AG04449 (cell line): ENCODE measurements at regions of chr11 and their contacts with region 1.

Region 1: DNA sequence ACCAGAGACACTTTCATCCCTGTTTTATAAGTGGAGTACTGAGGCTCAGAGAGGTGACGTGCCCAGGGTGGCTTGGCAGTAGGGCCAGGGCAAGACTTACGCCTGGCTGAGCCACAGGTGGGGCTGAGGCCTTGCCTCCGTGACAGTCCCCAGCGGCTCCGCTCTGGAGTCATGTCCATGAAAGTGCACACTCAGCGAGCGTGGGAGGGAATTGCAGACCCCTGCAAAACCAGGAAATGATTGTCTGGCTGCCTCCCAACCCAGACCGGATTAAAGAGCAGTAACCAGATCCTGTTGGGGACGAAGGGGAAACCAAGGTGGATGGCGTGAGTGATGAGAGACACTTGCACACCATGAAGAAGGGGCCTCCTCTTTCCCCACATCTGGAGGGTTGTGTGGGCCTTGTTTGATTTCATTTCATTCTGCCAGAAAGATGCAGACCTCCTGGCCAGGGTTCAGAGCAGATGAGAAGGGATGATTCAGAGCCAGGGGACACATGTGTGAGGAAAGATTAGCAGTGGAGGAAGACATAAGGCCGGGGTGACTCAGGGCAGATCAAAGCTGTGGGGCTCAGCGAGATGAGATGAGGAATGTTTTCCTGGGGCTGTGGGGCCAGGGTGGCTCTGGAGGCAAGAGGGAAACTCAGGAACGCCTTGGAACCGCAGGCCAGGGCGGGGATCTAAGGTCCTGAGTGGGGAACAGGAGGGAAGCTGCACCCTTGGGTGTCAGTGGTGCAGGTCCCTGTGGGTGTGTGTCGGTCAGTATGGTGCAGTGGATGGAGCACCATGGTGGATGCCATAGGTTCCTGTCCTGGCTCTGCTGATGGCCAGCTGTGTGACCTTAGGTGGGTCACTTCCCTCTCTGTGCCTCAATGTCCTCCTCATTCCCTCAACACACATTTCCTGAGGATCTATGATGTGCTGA is 29.9 kb upstream of the LRRC32 start:
- DNase-seq: peak; percentile 69
- H3K4me3 ChIP-seq: peak overlapping the region; percentile 15; the same call in 1 of the 2 replicates
- CTCF ChIP-seq: no peak

Region 2: DNA sequence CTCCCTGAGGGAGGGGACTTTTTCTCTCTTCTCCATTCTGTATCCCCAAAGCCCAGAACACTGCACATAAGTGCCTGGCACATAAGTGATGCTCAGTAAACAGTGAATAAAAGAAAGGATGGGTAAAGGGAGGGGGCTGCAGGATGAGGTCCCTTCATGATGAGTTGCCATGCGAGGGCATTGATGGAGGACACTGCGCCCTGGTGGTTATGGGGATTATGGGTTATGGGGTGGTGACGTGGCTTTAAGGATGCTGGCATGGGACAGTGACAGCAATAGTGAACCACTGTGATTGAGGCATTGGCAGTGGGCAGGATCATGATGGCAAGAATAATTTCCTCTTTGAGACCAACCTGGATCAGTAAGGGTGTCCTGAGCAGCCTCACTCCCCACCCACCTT is 14.1 kb after region 1 on chr11:
- CTCF ChIA-PET with region 1: interaction called, 44 read pairs
- POLR2A ChIA-PET with region 1: no interaction called
- DNase-seq: no peak
- H3K4me3 ChIP-seq: no peak overlapping the region
- CTCF ChIP-seq: no peak

Region 3: GRCh38 chr11:77187776-77188632 is 487.6 kb after region 1 on chr11:
- CTCF ChIA-PET with region 1: no interaction called
- POLR2A ChIA-PET with region 1: no interaction called
- DNase-seq: peak; percentile 21
- H3K4me3 ChIP-seq: no peak overlapping the region
- CTCF ChIP-seq: peak; percentile 86